Aorta (tissue), 5 donors: ENCODE measurements at regions of chr10 and their contacts with region 1.

Region 1: GRCh38 chr10:115092555-115093285 is 445 bp upstream of the ATRNL1 start:
- DNase-seq: peak; percentile 62 to 80
- ATAC-seq: peak; percentile 75
- H3K4me3 ChIP-seq: peak overlapping the region; percentile 86 to 97
- H3K27ac ChIP-seq: peak overlapping the region in 1 of 2 donors; percentile 76
- H3K4me1 ChIP-seq: peaks cover 0 to 2% of the 10 kb centered on the region in 2 donors
- H3K27me3 ChIP-seq: no peaks in the 10 kb centered on the region

Region 2: GRCh38 chr10:114937962-114938855 is 154.5 kb before region 1 on chr10 and contains the start of gene TRUB1:
- intact Hi-C with region 1: loop called in 1 of 2 experiments (anchors 5 kb)
- DNase-seq: peak; percentile 95 to 96
- ATAC-seq: peak; percentile 99
- H3K4me3 ChIP-seq: peak within 1 kb of the TSS; percentile 78 to 96
- H3K27ac ChIP-seq: peak within 1 kb of the TSS in 1 of 2 donors; percentile 7
- H3K4me1 ChIP-seq: peaks cover 0 to 2% of the 10 kb centered on the region in 2 donors
- H3K27me3 ChIP-seq: no peaks in the 10 kb centered on the region
- total RNA-seq, gene TRUB1: 5.4 to 10.0 TPM

Region 3: DNA sequence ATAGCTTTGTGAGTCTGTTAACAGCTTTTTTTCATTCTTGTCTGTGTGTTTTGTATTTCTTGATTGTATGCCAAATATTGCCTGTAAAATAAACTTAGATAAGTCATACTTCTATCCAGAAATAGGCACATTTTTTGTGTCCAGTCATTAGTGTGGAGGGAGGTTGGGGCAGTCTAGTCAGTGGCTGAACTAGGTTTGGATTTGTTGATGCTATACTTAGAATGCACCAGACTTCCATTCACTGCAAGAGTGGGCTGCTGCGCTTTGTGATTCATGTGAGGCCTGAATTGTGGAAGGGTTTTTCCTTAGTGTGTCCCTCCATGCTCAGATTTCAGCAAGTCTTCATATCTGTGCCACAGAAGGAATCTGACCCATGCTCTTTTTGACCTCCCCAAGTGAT is 104.7 kb before region 1 on chr10:
- intact Hi-C with region 1: loop called in 1 of 2 experiments (anchors 5 kb)
- DNase-seq: peak in 1 of 2 donors; percentile 58
- ATAC-seq: peak; percentile 46
- H3K4me3 ChIP-seq: no peak overlapping the region
- H3K27ac ChIP-seq: peak overlapping the region in 1 of 2 donors; percentile 96
- H3K4me1 ChIP-seq: peaks cover 4 to 6% of the 10 kb centered on the region in 2 donors
- H3K27me3 ChIP-seq: no peaks in the 10 kb centered on the region

Region 4: DNA sequence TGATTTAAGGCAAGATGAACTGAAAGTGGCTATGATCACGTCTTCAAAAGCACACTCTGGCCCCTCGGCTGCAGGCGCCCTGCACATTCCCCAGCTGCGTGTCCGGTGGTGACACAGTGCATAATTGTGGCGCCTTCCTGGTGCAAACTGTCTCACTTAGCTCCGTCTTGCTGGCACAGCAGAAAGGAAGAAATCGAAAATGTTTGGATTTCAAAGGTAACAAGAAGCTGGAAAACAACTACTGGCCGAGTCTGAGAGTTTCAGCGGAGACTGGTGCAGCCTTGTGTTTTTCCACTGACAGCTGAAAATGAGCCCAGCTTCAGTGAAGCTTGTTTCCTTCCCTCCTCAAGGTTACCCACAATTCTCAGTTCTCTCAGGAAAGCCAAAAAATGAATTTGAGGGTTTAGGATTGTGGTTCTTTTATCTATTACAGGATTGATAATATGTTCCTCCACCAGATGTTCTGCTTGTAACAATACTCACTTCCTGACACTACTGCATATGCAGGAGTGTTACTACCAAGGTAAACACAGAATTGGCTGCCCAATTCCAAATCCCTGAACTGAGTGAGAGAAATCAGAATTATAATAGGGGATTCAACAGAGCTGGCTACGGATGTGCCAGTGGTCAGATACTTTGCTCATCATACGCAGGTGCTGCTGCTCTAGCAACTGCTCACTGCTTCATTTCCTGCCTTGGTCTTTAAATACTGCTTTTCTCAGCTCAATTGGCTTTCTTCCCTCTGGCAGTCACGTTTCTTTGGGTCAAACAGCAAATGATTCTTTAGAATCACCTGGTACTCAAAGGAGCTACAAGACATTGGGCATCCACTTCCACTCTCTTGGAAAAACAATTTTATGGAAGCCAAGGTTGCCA is 91.0 kb before region 1 on chr10:
- intact Hi-C with region 1: loop called in 1 of 2 experiments (anchors 2 kb)
- DNase-seq: peak in 1 of 2 donors; percentile 58
- ATAC-seq: peak; percentile 70
- H3K4me3 ChIP-seq: peak overlapping the region; percentile 14 to 70
- H3K27ac ChIP-seq: peak overlapping the region; percentile 60 to 73
- H3K4me1 ChIP-seq: no peaks in the 10 kb centered on the region
- H3K27me3 ChIP-seq: no peaks in the 10 kb centered on the region